Heart left ventricle (tissue), 16 donors: ENCODE measurements at regions of chr11 and their contacts with region 1.

Region 1: GRCh38 chr11:124577716-124578427 is 8.1 kb downstream of the OR8A1 start:
- DNase-seq: peak in 1 of 5 donors; percentile 30
- ATAC-seq: peak in 3 of 4 donors; percentile 20 to 95 (median 26)
- H3K4me3 ChIP-seq: no peak overlapping the region
- H3K27ac ChIP-seq: no peak overlapping the region
- H3K4me1 ChIP-seq: peaks cover 0 to 5% (median 0%) of the 10 kb centered on the region in 12 donors
- H3K27me3 ChIP-seq: no peaks in the 10 kb centered on the region
- CTCF ChIP-seq: no peak
- POLR2A ChIP-seq: no peak

Region 2: DNA sequence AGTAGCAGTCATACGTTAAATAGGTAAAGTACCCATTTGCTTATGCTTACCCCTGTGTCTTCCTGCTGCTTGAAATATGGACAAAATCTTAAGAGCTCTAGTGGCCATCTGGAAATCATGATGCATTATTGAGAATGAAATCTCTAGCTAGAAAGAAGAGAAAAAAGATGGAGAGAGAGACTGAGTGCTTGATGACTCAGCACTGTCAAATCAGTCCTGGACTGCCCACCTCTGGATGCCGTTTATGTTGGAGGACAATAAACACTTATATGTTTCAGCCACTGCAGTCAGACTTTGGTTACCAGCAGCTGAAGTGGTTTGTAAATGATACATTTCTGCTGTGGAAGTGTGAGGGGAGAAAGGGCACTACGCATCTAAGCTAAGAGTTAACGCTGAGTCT is 156.8 kb before region 1 on chr11:
- intact Hi-C with region 1: loop called in 2 of 10 experiments (anchors 5 kb)
- DNase-seq: no peak
- ATAC-seq: no peak
- H3K4me3 ChIP-seq: no peak overlapping the region
- H3K27ac ChIP-seq: no peak overlapping the region
- H3K4me1 ChIP-seq: no peaks in the 10 kb centered on the region
- H3K27me3 ChIP-seq: peaks cover 0 to 19% (median 0%) of the 10 kb centered on the region in 9 donors
- CTCF ChIP-seq: no peak
- POLR2A ChIP-seq: no peak

Region 3: DNA sequence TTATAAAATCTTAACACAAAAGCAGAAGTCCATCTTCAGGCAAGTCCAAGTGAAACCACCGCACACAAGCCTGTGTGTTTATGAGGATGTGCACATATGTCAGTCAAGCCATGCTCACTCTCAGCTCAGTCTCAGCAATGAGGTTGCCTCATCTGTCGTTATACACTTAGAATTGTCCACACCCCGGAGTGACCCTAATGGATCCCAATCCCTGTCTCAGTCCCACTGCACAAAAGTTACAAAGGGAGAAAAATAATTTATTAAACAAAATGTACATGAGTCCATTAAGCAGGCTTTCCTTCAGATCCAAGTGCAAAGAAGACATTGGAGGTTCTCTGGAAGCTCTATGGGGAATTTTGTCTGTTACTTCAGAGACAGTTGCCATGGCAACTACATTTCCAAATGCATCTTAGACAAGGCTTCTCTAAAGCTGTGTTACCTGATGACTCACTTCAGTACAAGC is 58.9 kb before region 1 on chr11:
- intact Hi-C with region 1: no loop called
- DNase-seq: no peak
- ATAC-seq: no peak
- H3K4me3 ChIP-seq: no peak overlapping the region
- H3K27ac ChIP-seq: no peak overlapping the region
- H3K4me1 ChIP-seq: peaks cover 0 to 18% (median 0%) of the 10 kb centered on the region in 12 donors
- H3K27me3 ChIP-seq: peaks cover 0 to 4% (median 0%) of the 10 kb centered on the region in 9 donors
- CTCF ChIP-seq: no peak
- POLR2A ChIP-seq: no peak